ENCODE measurements at regions of chr18 and their contacts with region 1.

Region 1: GRCh38 chr18:63439334-63439733 is 17.1 kb upstream of the VPS4B start:
- DNase-seq: no peak
- H3K4me3 ChIP-seq: no peak overlapping the region
- H3K27ac ChIP-seq: no peak overlapping the region
- H3K4me1 ChIP-seq: peaks cover 0 to 19% (median 5%) of the 10 kb centered on the region in 6 donors
- H3K27me3 ChIP-seq: no peaks in the 10 kb centered on the region
- CTCF ChIP-seq: peak; percentile 40 to 81 (median 76)
- POLR2A ChIP-seq: no peak

Region 2: GRCh38 chr18:63063171-63063570 is 376.2 kb before region 1 on chr18:
- intact Hi-C with region 1: no loop called
- DNase-seq: no peak
- H3K4me3 ChIP-seq: no peak overlapping the region
- H3K27ac ChIP-seq: no peak overlapping the region
- H3K4me1 ChIP-seq: no peaks in the 10 kb centered on the region
- H3K27me3 ChIP-seq: no peaks in the 10 kb centered on the region
- CTCF ChIP-seq: no peak
- POLR2A ChIP-seq: no peak

Region 3: DNA sequence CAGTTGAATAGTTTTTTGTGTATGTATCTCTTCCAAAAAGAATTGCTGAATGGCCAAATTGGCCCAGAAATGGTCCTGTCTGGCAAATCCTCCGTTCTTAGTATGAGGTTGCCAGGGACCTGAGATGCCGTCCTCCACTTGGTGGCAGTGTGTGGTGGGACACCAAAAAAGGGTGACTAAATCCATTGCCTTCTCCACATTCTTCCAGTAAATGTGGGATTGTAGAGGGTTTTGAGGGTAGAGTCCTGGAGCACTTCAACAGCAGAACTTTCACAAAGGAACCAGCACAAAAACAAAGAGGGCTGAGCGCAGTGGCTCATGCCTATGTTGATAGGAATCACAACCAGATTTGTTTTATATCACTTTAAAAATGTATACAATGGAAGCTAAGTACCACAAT is 319.7 kb before region 1 on chr18:
- intact Hi-C with region 1: loop called (anchors 10 kb)
- DNase-seq: no peak
- H3K4me3 ChIP-seq: no peak overlapping the region
- H3K27ac ChIP-seq: no peak overlapping the region
- H3K4me1 ChIP-seq: peaks cover 0 to 5% (median 0%) of the 10 kb centered on the region in 6 donors
- H3K27me3 ChIP-seq: peaks cover 0 to 5% (median 0%) of the 10 kb centered on the region in 7 donors
- CTCF ChIP-seq: peak in 7 of 11 experiments; percentile 28 to 53 (median 45)
- POLR2A ChIP-seq: no peak

Region 4: DNA sequence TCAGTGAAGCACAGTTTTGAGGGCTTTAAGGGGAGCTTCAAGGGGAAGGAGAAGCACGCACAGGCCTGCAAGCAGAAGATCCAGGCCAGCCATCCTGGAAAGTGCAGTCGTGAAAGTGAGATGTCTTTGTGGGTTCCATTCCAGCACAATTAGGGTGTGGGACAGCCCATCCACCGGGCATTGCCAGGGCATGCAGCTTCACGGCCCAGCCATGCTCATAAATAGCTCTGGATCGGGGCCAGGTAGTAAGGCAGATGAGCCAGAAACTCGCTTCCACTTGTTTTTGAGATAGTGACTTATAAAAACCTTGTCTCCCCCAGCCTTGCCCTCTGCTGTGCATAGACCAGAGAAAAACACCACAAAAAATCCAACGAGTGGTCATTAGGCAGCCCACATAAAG is 93.3 kb before region 1 on chr18:
- intact Hi-C with region 1: loop called (anchors 5 kb)
- DNase-seq: no peak
- H3K4me3 ChIP-seq: no peak overlapping the region
- H3K27ac ChIP-seq: no peak overlapping the region
- H3K4me1 ChIP-seq: peaks cover 0 to 16% (median 3%) of the 10 kb centered on the region in 6 donors
- H3K27me3 ChIP-seq: no peaks in the 10 kb centered on the region
- CTCF ChIP-seq: no peak
- POLR2A ChIP-seq: no peak